ENCODE measurements at regions of chr2 and their contacts with region 1.

Region 1: DNA sequence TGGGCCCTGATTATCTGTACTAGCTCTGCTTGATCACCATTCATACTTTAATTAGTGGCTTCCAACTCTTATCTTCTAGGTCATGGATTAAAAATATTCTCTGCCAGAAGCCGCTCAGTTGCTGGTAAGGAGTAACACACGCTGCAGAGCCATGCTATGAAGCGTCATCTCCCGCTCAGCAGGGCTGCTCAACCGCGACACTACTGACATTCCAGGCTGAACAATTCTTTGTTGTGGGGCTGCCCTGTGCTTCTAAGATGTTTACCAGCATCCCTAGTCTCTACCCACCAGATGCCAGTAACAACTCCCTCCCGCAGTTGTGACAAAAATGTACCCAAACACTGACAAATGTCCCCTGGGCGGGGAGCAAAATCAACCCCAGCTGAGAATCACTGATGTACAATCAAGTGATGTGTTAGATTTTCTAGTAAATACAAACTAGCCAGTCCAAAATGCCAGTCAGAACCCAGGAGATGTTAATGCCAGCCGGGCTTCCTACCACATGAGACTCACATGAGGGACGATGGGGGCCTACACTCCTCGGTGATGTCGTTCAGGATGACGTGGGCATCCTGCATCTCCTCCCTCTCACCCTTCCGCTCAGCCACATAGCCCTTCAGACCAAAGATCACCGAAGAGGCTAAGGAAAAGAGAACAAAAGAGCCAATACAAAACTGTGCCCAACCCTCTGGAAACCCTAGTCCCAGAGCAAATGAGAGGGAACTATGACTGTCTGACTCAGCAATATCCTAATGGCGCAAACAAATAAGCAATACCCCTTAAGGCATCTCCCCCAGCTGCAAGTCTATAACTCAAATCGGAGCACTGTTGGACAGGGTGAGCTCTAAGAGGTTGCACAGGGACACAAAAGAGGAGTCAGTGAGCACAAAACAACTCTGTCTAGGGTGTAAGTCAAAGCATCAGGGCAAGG is 15.6 kb downstream of the ILKAP start:
- DNase-seq: no peak
- ATAC-seq: peak in 7 of 8 donors; percentile 54 to 89 (median 81)
- H3K4me3 ChIP-seq: no peak overlapping the region
- H3K27ac ChIP-seq: peak overlapping the region in 2 of 10 donors; percentile 8 to 19
- H3K4me1 ChIP-seq: peaks cover 0 to 15% (median 0%) of the 10 kb centered on the region in 9 donors
- H3K27me3 ChIP-seq: no peaks in the 10 kb centered on the region
- CTCF ChIP-seq: no peak

Region 2: DNA sequence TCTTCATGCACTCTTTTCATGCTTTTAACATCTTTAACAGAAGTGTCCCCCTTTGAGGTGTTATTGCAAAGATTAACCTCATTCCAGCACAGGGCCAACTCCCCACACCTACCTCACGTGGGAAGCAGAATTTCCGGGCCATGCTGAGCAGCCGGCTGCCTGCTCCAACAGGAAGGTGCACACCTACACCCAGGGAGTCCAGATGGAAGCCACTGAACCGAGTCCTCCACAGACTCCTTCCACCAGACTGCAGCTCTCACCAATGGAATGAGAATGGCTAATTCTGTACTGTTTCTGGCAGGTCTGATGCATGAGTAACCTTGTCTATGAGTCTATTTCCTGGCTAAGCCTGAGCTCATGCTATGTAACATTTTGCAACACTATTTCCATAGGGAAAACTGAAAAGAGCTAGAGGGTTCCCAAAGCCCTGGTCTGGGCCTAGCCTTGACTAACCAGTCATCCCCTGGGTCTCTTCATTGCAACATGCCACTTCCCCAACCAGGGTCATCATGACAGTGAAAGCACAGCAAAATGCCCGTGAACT is 18.1 kb before region 1 on chr2:
- intact Hi-C with region 1: no loop called
- DNase-seq: no peak
- ATAC-seq: peak in 2 of 8 donors; percentile 20 to 76
- H3K4me3 ChIP-seq: no peak overlapping the region
- H3K27ac ChIP-seq: peak overlapping the region in 3 of 10 donors; percentile 40 to 80 (median 42)
- H3K4me1 ChIP-seq: peaks cover 0 to 23% (median 11%) of the 10 kb centered on the region in 9 donors
- H3K27me3 ChIP-seq: peaks cover 0 to 6% (median 3%) of the 10 kb centered on the region in 7 donors
- CTCF ChIP-seq: no peak

Region 3: DNA sequence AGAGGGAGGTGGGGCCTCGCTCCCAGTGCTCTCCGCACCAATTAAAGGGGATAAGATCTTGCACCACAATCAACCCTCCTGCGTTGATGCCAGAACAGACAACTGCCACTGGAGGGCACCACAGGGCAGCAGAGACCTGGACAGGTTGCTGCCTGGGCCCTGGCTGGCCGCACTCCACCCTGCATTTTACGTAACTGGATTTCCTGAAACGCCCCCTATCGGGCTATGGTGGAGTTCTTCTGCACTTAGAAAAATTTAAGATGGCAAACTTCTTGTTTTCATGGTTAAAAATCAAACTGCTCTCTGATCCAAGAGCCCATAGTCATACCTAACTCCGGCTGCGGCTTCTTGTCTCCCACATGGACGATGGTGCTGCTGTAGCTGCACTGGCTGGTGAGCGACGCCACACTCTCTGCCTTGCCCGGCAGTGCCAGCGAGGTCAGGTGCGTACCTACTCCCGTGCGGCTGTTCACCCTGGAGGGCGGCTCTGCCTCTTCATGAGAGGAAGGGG is 68.8 kb after region 1 on chr2:
- intact Hi-C with region 1: loop called in 1 of 10 experiments (anchors 10 kb)
- DNase-seq: peak; percentile 57 to 62
- ATAC-seq: peak in 7 of 8 donors; percentile 35 to 66 (median 53)
- H3K4me3 ChIP-seq: no peak overlapping the region
- H3K27ac ChIP-seq: no peak overlapping the region
- H3K4me1 ChIP-seq: peaks cover 0 to 13% (median 7%) of the 10 kb centered on the region in 9 donors
- H3K27me3 ChIP-seq: no peaks in the 10 kb centered on the region
- CTCF ChIP-seq: peak; percentile 53 to 80 (median 72)

Region 4: GRCh38 chr2:238573065-238573778 is 385.3 kb after region 1 on chr2:
- intact Hi-C with region 1: no loop called
- DNase-seq: no peak
- ATAC-seq: no peak
- H3K4me3 ChIP-seq: no peak overlapping the region
- H3K27ac ChIP-seq: no peak overlapping the region
- H3K4me1 ChIP-seq: peaks cover 0 to 3% (median 0%) of the 10 kb centered on the region in 9 donors
- H3K27me3 ChIP-seq: peaks cover 0 to 6% (median 1%) of the 10 kb centered on the region in 7 donors
- CTCF ChIP-seq: peak in 8 of 9 donors; percentile 30 to 55 (median 46)